Heart right ventricle (tissue), 16 donors: ENCODE measurements at regions of chr16 and their contacts with region 1.

Region 1: GRCh38 chr16:79707876-79708275 is 107.3 kb upstream of the MAF start:
- DNase-seq: peak; percentile 54 to 59
- ATAC-seq: peak; percentile 69 to 96 (median 86)
- H3K4me3 ChIP-seq: no peak overlapping the region
- H3K27ac ChIP-seq: peak overlapping the region in 5 of 10 donors; percentile 20 to 55 (median 34)
- H3K4me1 ChIP-seq: peaks cover 0 to 4% (median 0%) of the 10 kb centered on the region in 9 donors
- H3K27me3 ChIP-seq: no peaks in the 10 kb centered on the region
- CTCF ChIP-seq: no peak

Region 2: GRCh38 chr16:79784007-79784406 is 76.1 kb after region 1 on chr16:
- intact Hi-C with region 1: loop called in 1 of 10 experiments (anchors 2 kb)
- DNase-seq: no peak
- ATAC-seq: no peak
- H3K4me3 ChIP-seq: no peak overlapping the region
- H3K27ac ChIP-seq: no peak overlapping the region
- H3K4me1 ChIP-seq: no peaks in the 10 kb centered on the region
- H3K27me3 ChIP-seq: no peaks in the 10 kb centered on the region
- CTCF ChIP-seq: no peak